ENCODE measurements at regions of chr7 and their contacts with region 1.

Region 1: DNA sequence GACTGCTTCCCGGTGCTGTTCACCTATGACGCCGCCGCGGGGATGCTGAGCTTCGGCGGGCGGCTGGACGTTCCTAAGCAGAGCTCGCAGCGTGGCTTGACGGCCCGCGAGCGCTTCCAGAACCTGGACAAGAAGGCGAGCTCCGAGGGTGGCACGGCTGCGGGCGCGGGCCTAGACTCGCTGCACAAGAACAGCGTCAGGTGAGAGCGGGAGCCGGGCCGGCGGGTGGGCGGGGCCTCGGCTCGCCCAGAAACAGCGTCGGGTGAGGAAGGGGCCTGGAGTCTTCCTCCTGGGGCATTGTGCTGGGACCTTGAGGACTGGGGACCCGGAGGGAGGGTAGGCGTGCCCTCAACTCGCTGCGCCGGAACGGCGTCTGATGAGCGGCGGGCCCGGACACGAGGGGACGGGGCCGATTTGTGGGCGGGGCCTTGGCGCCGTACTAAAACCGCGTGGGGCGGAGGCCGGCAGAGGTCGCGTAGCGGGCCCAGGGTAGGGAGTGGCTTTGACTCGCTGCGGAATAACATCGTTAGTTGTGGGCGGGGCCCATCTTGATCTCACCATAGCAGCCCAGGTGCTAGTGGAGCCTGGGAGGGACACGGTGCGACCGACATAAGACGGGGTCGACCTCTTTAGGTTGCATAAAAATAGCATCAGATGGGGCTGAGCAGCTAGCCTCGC is 15.6 kb downstream of the PDAP1 start:
- DNase-seq: peak; percentile 93
- H3K4me3 Mint-ChIP-seq: peak overlapping the region; percentile 69
- H3K27ac Mint-ChIP-seq: peak overlapping the region; percentile 79
- H3K4me1 Mint-ChIP-seq: peaks cover 11% of the 10 kb centered on the region
- H3K27me3 Mint-ChIP-seq: no peaks in the 10 kb centered on the region

Region 2: GRCh38 chr7:99374103-99375064 is 18.4 kb before region 1 on chr7 and contains the start of gene ARPC1B:
- intact Hi-C with region 1: loop called (anchors 2 kb)
- DNase-seq: peak; percentile 94
- H3K4me3 Mint-ChIP-seq: peak within 1 kb of the TSS; percentile 82
- H3K27ac Mint-ChIP-seq: peak within 1 kb of the TSS; percentile 84
- H3K4me1 Mint-ChIP-seq: peaks cover 32% of the 10 kb centered on the region
- H3K27me3 Mint-ChIP-seq: no peaks in the 10 kb centered on the region
- total RNA-seq, gene ARPC1B: 248 and 250 TPM in 2 replicates

Measured in activated CD4-positive, alpha-beta T cell treated with anti-CD3 and anti-CD28 coated beads, Interleukin-2, amount 10 ng/mL, durations not matched to agents 24 days and 14 days (primary cell).